Endothelial cell of umbilical vein (primary cell): ENCODE measurements at regions of chr9 and their contacts with region 1.

Region 1: DNA sequence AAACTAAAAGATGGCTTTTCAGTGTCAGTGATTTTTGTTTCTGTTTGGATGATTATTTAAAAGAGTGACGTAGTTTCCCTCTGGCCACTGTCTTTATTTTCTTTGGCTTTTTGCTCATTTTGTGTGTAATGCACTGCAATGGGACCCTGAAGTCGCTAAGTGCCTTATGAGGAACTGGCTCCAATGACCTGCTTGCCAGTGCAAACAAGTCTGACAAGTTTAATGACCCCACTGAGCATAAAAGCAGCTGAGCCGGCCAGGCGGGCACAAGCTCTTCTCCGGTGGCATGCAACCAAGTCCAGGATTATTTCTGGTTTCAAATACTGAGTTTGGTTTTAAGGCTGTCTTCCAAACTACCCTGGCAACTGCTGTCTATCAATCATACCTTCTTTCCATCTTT is 15.6 kb upstream of the GNA14 start:
- DNase-seq: peak; percentile 78
- H3K4me3 ChIP-seq: no peak overlapping the region
- H3K27ac ChIP-seq: no peak overlapping the region
- H3K4me1 ChIP-seq: peaks cover 9% of the 10 kb centered on the region
- H3K27me3 ChIP-seq: no peaks in the 10 kb centered on the region
- CTCF ChIP-seq: no peak
- POLR2A ChIP-seq: no peak

Region 2: DNA sequence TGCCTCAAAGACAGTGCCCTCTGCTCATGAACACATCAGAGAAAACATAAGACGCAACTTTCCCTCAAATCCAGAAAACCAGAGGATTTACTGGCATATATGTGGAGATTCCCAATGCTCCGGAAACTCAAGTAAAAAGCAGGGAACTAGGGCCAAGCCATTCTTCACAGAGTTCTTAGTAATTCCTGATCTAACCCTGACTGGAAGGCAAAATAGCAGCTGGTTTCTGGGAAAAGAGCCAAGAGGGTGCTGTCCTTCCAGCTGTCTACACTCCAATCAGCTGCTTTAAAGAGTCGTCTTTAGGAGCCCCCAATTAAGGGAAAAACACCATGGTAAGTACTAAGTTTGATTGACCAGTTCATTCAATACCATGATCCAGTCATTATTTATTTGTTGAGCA is 65.2 kb before region 1 on chr9:
- CTCF ChIA-PET with region 1: no interaction called
- POLR2A ChIA-PET with region 1: no interaction called
- dilution Hi-C with region 1: no loop called
- intact Hi-C with region 1: no loop called
- DNase-seq: peak; percentile 89
- H3K4me3 ChIP-seq: no peak overlapping the region
- H3K27ac ChIP-seq: no peak overlapping the region
- H3K4me1 ChIP-seq: peaks cover 45% of the 10 kb centered on the region
- H3K27me3 ChIP-seq: no peaks in the 10 kb centered on the region
- CTCF ChIP-seq: no peak
- POLR2A ChIP-seq: no peak

Region 3: DNA sequence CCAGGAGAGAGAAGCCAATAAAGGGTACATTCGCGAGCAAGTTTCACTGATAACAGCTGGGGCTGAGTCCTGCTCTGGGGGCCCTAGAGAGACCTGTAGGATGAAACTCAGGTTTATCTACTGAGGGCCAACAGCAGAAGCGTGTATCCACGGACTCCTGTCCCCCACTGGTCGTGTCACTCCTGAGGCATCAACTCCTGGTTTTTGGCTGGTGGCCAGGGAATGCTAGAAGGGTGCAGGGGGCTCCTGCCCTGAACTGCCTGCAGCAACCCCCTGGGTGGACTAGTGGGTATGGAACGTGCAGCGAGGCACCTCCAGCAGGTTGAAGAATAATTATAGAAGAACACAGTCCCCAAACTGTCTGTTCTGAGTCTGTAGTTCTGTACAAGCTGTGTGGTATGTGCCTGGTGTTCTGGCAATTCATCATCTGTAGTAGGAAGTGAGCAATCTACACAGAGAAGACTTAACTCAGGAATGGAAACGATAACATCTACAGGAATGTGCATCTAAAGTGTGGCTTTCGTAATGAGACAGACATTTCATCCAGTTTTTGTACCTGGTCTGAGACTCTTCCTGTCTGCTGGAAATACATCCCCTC is 48.9 kb after region 1 on chr9:
- CTCF ChIA-PET with region 1: interaction called, 4 read pairs
- POLR2A ChIA-PET with region 1: no interaction called
- dilution Hi-C with region 1: no loop called
- intact Hi-C with region 1: loop called (anchors 5 kb)
- DNase-seq: peak; percentile 81
- H3K4me3 ChIP-seq: peak overlapping the region in 1 of 3 experiments; percentile 19
- H3K27ac ChIP-seq: peak overlapping the region; percentile 97
- H3K4me1 ChIP-seq: peaks cover 69% of the 10 kb centered on the region
- H3K27me3 ChIP-seq: no peaks in the 10 kb centered on the region
- CTCF ChIP-seq: no peak
- POLR2A ChIP-seq: no peak